ENCODE measurements at regions of chr11 and their contacts with region 1.

Region 1: GRCh38 chr11:102390667-102391465 is 43.9 kb downstream of the BIRC2 start:
- DNase-seq: peak; percentile 68
- ATAC-seq: peak; percentile 78
- H3K4me3 Mint-ChIP-seq: no peak overlapping the region
- H3K27ac Mint-ChIP-seq: peak overlapping the region; percentile 44
- H3K4me1 Mint-ChIP-seq: peaks cover 41% of the 10 kb centered on the region
- H3K27me3 Mint-ChIP-seq: no peaks in the 10 kb centered on the region

Region 2: GRCh38 chr11:102287964-102288724 is 102.7 kb before region 1 on chr11:
- CTCF ChIA-PET with region 1: interaction called, 12 read pairs
- POLR2A ChIA-PET with region 1: no interaction called
- intact Hi-C with region 1: no loop called
- DNase-seq: peak; percentile 50
- ATAC-seq: peak; percentile 92
- H3K4me3 Mint-ChIP-seq: peak overlapping the region; percentile 34
- H3K27ac Mint-ChIP-seq: peak overlapping the region; percentile 59
- H3K4me1 Mint-ChIP-seq: peaks cover 24% of the 10 kb centered on the region
- H3K27me3 Mint-ChIP-seq: no peaks in the 10 kb centered on the region

Region 3: GRCh38 chr11:102361086-102362031 is 29.5 kb before region 1 on chr11:
- CTCF ChIA-PET with region 1: interaction called, 6 read pairs
- POLR2A ChIA-PET with region 1: no interaction called
- intact Hi-C with region 1: loop called in 1 of 2 experiments (anchors 5 kb)
- DNase-seq: peak; percentile 33
- ATAC-seq: peak; percentile 86
- H3K4me3 Mint-ChIP-seq: no peak overlapping the region
- H3K27ac Mint-ChIP-seq: peak overlapping the region; percentile 75
- H3K4me1 Mint-ChIP-seq: peaks cover 42% of the 10 kb centered on the region
- H3K27me3 Mint-ChIP-seq: no peaks in the 10 kb centered on the region

Region 4: GRCh38 chr11:102410382-102410784 is 19.5 kb after region 1 on chr11:
- CTCF ChIA-PET with region 1: interaction called, 14 read pairs
- POLR2A ChIA-PET with region 1: interaction called, 3 read pairs
- intact Hi-C with region 1: no loop called
- DNase-seq: no peak
- ATAC-seq: no peak
- H3K4me3 Mint-ChIP-seq: no peak overlapping the region
- H3K27ac Mint-ChIP-seq: no peak overlapping the region
- H3K4me1 Mint-ChIP-seq: peaks cover 88% of the 10 kb centered on the region
- H3K27me3 Mint-ChIP-seq: no peaks in the 10 kb centered on the region

Region 5: GRCh38 chr11:102430158-102430836 is 39.4 kb after region 1 on chr11:
- CTCF ChIA-PET with region 1: interaction called, 14 read pairs
- POLR2A ChIA-PET with region 1: no interaction called
- intact Hi-C with region 1: loop called in 1 of 2 experiments (anchors 5 kb)
- DNase-seq: peak; percentile 71
- ATAC-seq: peak; percentile 89
- H3K4me3 Mint-ChIP-seq: peak overlapping the region; percentile 23
- H3K27ac Mint-ChIP-seq: peak overlapping the region; percentile 96
- H3K4me1 Mint-ChIP-seq: peaks cover 79% of the 10 kb centered on the region
- H3K27me3 Mint-ChIP-seq: no peaks in the 10 kb centered on the region

Region 6: DNA sequence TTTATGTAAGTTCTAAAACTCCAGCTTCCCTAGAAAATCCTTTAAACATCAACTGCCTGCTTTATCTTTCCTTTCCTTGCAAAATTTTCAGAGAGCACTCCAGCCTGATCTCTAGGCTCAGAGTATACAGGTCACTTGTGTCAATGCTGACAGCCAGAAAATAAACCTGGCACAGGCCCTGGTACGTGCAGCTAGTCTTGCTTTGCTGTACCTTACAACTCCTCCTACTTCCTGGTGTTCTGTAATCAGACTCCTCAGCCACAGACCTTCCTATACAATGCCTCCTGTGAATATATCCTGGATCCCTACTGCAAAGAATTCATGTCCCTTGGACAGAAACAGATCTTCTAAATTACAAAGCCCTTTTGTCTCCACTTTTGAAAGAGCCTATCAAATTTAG is 85.9 kb after region 1 on chr11:
- CTCF ChIA-PET with region 1: interaction called, 16 read pairs
- POLR2A ChIA-PET with region 1: no interaction called
- intact Hi-C with region 1: no loop called
- DNase-seq: peak; percentile 74
- ATAC-seq: peak; percentile 86
- H3K4me3 Mint-ChIP-seq: peak overlapping the region; percentile 1
- H3K27ac Mint-ChIP-seq: peak overlapping the region; percentile 81
- H3K4me1 Mint-ChIP-seq: peaks cover 64% of the 10 kb centered on the region
- H3K27me3 Mint-ChIP-seq: no peaks in the 10 kb centered on the region

Region 7: DNA sequence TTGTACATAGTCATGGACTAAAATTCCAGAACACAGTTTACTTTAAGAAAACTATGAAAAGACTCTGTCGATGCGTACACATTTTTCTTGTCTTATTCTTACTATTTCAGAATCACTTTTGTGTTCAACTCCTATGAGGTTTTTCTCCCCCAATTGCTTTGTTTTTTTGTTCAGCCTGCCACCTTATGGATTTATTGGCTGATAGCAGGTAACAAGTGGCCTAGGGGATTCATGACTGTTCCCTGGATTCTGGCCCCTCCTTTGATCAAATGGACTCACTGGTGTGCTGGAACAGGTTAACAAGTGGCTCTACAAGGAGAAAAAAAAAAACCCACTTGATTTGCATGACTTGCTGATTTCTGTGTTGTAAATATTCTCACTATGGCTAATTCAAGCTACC is 223.6 kb after region 1 on chr11:
- CTCF ChIA-PET with region 1: interaction called, 6 read pairs
- POLR2A ChIA-PET with region 1: no interaction called
- intact Hi-C with region 1: loop called in 1 of 2 experiments (anchors 1 kb)
- DNase-seq: no peak
- ATAC-seq: no peak
- H3K4me3 Mint-ChIP-seq: no peak overlapping the region
- H3K27ac Mint-ChIP-seq: no peak overlapping the region
- H3K4me1 Mint-ChIP-seq: peaks cover 13% of the 10 kb centered on the region
- H3K27me3 Mint-ChIP-seq: no peaks in the 10 kb centered on the region